Activated T-helper 2 cell treated with anti-CD3 and anti-CD28 coated beads, Interferon-gamma antibody, Interleukin-2, Interleukin-4, amounts not matched to agents 10 μg/mL and 5 μg/mL and 100 μg/mL, durations not matched to agents 14 hours and 24 hours and 36 hours (primary cell): ENCODE measurements at regions of chr2 and their contacts with region 1.

Region 1: DNA sequence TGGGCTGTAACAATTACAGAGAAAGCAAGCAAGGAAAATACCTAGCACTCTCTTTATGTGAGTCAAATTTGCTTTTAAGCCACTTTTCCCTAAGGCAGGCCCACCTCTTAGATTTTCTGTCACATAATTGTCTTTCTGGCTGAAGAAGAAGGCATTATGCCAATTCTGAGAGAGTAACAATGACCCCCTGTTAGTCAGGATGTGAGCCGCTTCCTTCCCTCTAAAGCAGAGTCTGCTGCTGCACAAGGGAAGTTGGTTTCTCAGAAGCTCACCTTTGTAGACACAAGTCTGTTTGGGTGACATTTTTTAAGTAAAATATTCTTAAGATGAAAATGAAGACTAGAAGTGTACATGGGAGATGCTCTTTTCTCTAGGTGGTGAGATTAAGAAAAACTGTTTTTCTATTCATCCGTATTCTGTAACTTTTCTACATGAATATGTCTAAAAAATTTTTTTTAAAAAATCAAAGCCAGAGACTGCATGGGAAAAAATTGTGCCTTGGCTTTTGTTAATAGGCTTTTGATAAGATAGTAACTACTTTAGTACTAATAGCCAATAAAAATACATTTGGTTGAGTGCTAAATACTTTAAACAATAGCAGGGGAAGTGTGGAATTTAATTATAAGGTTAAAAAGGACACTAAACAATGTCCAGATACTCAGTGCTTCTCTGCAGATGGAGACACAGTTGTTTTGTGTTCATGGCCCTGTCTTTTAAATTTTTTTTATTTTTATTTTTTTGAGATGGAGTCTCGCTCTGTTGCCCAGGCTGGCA is 33.4 kb upstream of the VPS54 start:
- DNase-seq: no peak
- H3K4me3 Mint-ChIP-seq: no peak overlapping the region
- H3K27ac Mint-ChIP-seq: no peak overlapping the region
- H3K4me1 Mint-ChIP-seq: peaks cover 34% of the 10 kb centered on the region
- H3K27me3 Mint-ChIP-seq: peaks cover 5% of the 10 kb centered on the region

Region 2: GRCh38 chr2:64119369-64119768 is 66.7 kb after region 1 on chr2:
- intact Hi-C with region 1: no loop called
- DNase-seq: no peak
- H3K4me3 Mint-ChIP-seq: no peak overlapping the region
- H3K27ac Mint-ChIP-seq: no peak overlapping the region
- H3K4me1 Mint-ChIP-seq: peaks cover 28% of the 10 kb centered on the region
- H3K27me3 Mint-ChIP-seq: peaks cover 2% of the 10 kb centered on the region

Region 3: DNA sequence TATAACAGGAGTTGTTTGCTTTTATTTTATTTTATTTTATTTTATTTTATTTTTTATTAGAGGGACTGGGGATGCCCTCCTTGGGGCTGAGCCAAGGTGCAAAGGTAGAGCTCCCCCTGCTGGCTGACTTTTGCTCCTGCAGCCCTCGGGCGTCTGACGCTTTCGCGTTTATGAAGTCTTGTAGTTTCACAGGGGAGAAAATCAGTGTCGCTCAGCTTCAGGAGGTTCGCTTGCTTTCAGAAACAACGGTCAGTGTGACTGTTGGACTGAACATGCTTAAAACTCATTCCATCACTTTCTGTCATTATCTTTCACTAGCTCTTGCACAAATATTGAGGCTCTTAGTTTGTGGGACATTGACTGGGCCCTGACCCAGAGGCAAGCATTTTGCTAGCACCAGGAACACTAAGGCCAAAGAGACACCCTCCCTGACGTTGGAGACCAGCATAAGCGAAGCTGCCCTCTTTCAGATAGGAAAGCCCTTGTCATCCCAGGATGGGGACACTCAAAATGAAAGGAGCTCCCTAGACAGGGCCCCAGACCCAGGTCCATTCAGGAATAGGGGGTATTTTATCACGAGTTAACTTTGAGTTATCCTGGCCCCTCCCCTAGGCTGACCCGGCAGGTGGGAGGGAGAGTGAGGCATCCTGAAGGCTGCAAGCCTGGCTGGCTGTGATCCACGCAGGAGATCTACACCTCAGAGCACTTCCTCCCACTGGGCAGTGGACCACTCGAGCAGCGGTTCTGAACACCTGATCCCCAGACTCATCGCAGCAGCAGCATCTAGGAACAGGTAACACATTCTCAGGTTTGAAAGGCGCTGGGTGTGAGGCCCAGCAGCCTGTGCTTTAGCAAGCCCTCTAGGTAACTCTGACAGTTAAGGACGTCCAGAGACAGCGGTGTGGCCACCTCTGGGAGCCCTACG is 435.7 kb after region 1 on chr2:
- intact Hi-C with region 1: loop called (anchors 1 kb)
- DNase-seq: peak; percentile 55
- H3K4me3 Mint-ChIP-seq: no peak overlapping the region
- H3K27ac Mint-ChIP-seq: no peak overlapping the region
- H3K4me1 Mint-ChIP-seq: peaks cover 15% of the 10 kb centered on the region
- H3K27me3 Mint-ChIP-seq: peaks cover 39% of the 10 kb centered on the region